ENCODE measurements at regions of chrX and their contacts with region 1.

Region 1: DNA sequence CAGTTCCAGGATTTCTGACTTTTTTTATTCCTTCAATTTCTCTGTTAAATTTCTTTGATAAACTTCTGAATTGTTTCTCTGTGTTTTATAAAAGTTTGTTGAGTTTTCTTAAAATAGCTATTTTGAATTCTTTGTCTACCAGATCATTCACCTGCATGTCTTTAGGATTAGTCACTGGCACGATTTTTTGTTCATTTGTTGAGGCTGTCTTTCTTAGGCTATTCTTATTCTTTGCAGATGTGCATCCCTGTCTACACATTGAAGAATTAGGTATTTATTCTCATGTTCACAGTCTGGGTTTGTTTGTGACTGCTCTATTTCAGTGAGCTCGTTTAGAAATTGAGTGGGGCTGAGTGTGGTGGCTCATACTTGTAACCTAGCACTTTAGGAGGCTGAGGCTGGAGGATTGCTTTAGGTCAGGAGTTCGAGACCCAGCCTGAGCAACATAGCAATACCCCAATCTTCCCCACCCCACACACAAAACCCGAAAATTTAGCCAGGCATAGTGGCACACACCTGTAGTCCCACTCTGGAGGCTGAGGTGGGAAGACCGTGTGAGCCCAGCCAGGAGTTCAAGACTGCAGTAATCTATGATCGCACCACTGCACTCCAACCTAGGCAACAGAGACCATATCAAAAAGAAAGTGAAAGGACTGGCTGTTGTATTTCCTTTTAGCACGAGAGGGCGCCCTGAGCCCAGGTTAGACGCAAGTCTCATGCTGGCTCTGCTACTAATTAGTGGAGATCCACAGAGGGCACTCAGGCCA is 42.0 kb downstream of the F8 start:
- DNase-seq: peak; percentile 66
- H3K4me3 ChIP-seq: peak overlapping the region; percentile 33 to 57
- H3K27ac ChIP-seq: no peak overlapping the region
- H3K4me1 ChIP-seq: no peaks in the 10 kb centered on the region
- H3K27me3 ChIP-seq: no peaks in the 10 kb centered on the region
- CTCF ChIP-seq: peak; percentile 74
- EP300 ChIP-seq: no peak
- RAD21 ChIP-seq: peak; percentile 92

Region 2: DNA sequence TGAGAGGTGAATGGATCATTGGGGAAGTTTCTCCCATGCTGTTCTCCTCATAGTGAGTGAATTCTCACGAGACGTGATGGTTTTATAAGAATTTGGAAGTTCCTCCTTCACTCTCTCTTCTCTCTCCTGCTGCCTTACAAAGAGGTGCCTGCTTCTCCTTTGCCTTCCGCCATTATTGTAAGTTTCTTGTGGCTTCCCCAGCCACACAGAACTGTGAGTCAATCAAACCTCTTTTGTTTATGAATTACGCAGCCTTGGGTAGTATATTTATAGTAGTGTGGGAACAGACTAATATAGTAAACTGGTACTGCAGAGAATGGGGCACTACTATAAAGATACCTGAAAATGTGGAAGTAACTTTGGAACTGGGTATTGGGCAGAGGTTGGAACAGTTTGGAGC is 319.3 kb before region 1 on chrX:
- CTCF ChIA-PET with region 1: no interaction called
- POLR2A ChIA-PET with region 1: no interaction called
- DNase-seq: no peak
- H3K4me3 ChIP-seq: no peak overlapping the region
- H3K27ac ChIP-seq: no peak overlapping the region
- H3K4me1 ChIP-seq: no peaks in the 10 kb centered on the region
- H3K27me3 ChIP-seq: peaks cover 19% of the 10 kb centered on the region; the same call in 1 of the 2 replicates
- CTCF ChIP-seq: no peak
- EP300 ChIP-seq: no peak
- RAD21 ChIP-seq: no peak

Region 3: GRCh38 chrX:154918060-154918483 is 62.4 kb before region 1 on chrX:
- CTCF ChIA-PET with region 1: interaction called, 12 read pairs
- POLR2A ChIA-PET with region 1: no interaction called
- DNase-seq: peak; percentile 65
- H3K4me3 ChIP-seq: peak overlapping the region; percentile 6 to 22; a peak in 2 of 4 replicates
- H3K27ac ChIP-seq: peak overlapping the region; percentile 2 to 9; a peak in 2 of 4 replicates
- H3K4me1 ChIP-seq: no peaks in the 10 kb centered on the region; a peak in 1 of 4 replicates
- H3K27me3 ChIP-seq: no peaks in the 10 kb centered on the region
- CTCF ChIP-seq: peak; percentile 83
- EP300 ChIP-seq: no peak
- RAD21 ChIP-seq: peak; percentile 90

Measured in SK-N-SH (cell line).